Activated CD4-positive, alpha-beta T cell treated with anti-CD3 and anti-CD28 coated beads for 36 hours (primary cell): ENCODE measurements at regions of chr10 and their contacts with region 1.

Region 1: GRCh38 chr10:12656518-12657142 is 307.3 kb downstream of the CAMK1D start:
- DNase-seq: no peak
- ATAC-seq: peak; percentile 75
- H3K4me3 Mint-ChIP-seq: no peak overlapping the region
- H3K27ac Mint-ChIP-seq: no peak overlapping the region
- H3K4me1 Mint-ChIP-seq: peaks cover 27% of the 10 kb centered on the region
- H3K27me3 Mint-ChIP-seq: no peaks in the 10 kb centered on the region

Region 2: DNA sequence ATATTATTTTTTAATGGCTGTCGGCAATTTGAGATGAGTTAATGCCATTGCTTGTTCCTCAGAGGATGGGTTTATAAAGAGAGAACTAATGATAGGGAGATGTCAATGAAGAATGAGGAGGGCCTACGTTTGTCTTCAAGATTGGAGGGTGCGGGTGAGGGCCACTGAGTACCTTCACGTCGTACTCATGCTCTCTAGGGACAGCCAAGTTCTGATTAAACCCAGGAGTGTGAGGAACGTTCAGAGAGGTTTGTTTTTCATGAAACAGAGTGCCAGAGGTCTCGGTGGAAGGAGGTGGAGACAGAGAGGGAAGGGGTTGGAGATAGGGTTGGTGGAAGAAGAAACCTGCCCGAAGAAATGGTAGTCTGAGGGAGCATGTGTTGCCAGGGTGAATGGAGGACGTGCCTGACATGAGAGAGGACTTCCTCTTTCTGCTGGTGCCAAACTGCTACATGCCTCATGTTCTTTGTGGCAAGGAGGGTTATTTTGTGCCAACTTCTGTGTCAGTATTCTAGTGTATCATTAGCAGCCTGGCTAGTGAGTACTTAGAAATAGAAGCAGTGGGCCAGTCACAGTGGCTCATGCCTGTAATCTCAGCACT is 579.0 kb before region 1 on chr10:
- CTCF ChIA-PET with region 1: no interaction called
- POLR2A ChIA-PET with region 1: no interaction called
- intact Hi-C with region 1: no loop called
- DNase-seq: no peak
- ATAC-seq: no peak
- H3K4me3 Mint-ChIP-seq: no peak overlapping the region
- H3K27ac Mint-ChIP-seq: no peak overlapping the region
- H3K4me1 Mint-ChIP-seq: no peaks in the 10 kb centered on the region
- H3K27me3 Mint-ChIP-seq: no peaks in the 10 kb centered on the region

Region 3: DNA sequence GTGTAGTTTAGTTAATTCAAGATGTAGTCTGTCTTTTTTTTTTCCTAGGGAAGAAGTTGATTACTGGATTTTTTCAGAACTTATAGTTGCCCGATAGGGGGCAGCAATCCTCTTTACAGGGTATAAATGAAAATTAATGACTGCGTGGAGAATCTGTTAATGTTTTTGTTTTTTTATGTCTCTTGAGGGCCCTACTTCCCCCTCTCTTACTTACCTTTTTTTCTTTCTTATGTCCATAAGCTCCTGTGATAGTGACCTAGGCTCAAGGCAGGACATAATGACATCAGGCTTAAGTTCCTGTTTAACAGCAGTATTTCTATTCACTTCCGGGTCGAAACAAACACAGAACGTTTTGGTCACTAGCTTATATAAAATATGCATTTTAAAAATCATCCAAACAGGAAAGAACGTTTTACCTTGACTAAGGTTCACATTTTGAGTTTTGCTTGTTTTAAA is 441.8 kb before region 1 on chr10:
- CTCF ChIA-PET with region 1: interaction called, 23 read pairs
- POLR2A ChIA-PET with region 1: no interaction called
- intact Hi-C with region 1: loop called in 1 of 2 experiments (anchors 1 kb)
- DNase-seq: peak; percentile 62
- ATAC-seq: peak; percentile 44
- H3K4me3 Mint-ChIP-seq: no peak overlapping the region
- H3K27ac Mint-ChIP-seq: peak overlapping the region; percentile 77
- H3K4me1 Mint-ChIP-seq: peaks cover 17% of the 10 kb centered on the region
- H3K27me3 Mint-ChIP-seq: no peaks in the 10 kb centered on the region

Region 4: GRCh38 chr10:12484941-12485805 is 171.5 kb before region 1 on chr10:
- CTCF ChIA-PET with region 1: no interaction called
- POLR2A ChIA-PET with region 1: no interaction called
- intact Hi-C with region 1: loop called in 1 of 2 experiments (anchors 5 kb)
- DNase-seq: peak; percentile 64
- ATAC-seq: peak; percentile 82
- H3K4me3 Mint-ChIP-seq: peak overlapping the region; percentile 4
- H3K27ac Mint-ChIP-seq: peak overlapping the region; percentile 73
- H3K4me1 Mint-ChIP-seq: peaks cover 25% of the 10 kb centered on the region
- H3K27me3 Mint-ChIP-seq: no peaks in the 10 kb centered on the region

Region 5: GRCh38 chr10:12594448-12594944 is 62.1 kb before region 1 on chr10:
- CTCF ChIA-PET with region 1: interaction called, 11 read pairs
- POLR2A ChIA-PET with region 1: no interaction called
- intact Hi-C with region 1: no loop called
- DNase-seq: peak; percentile 66
- ATAC-seq: peak; percentile 74
- H3K4me3 Mint-ChIP-seq: peak overlapping the region; percentile 49
- H3K27ac Mint-ChIP-seq: peak overlapping the region; percentile 94
- H3K4me1 Mint-ChIP-seq: peaks cover 90% of the 10 kb centered on the region
- H3K27me3 Mint-ChIP-seq: no peaks in the 10 kb centered on the region

Region 6: GRCh38 chr10:12644380-12645144 is 12.1 kb before region 1 on chr10:
- CTCF ChIA-PET with region 1: interaction called, 17 read pairs
- POLR2A ChIA-PET with region 1: no interaction called
- intact Hi-C with region 1: no loop called
- DNase-seq: peak; percentile 44
- ATAC-seq: peak; percentile 76
- H3K4me3 Mint-ChIP-seq: no peak overlapping the region
- H3K27ac Mint-ChIP-seq: peak overlapping the region; percentile 70
- H3K4me1 Mint-ChIP-seq: peaks cover 30% of the 10 kb centered on the region
- H3K27me3 Mint-ChIP-seq: no peaks in the 10 kb centered on the region

Region 7: GRCh38 chr10:12934777-12935176 is 278.1 kb after region 1 on chr10:
- CTCF ChIA-PET with region 1: no interaction called
- POLR2A ChIA-PET with region 1: no interaction called
- intact Hi-C with region 1: no loop called
- DNase-seq: no peak
- ATAC-seq: no peak
- H3K4me3 Mint-ChIP-seq: no peak overlapping the region
- H3K27ac Mint-ChIP-seq: no peak overlapping the region
- H3K4me1 Mint-ChIP-seq: no peaks in the 10 kb centered on the region
- H3K27me3 Mint-ChIP-seq: peaks cover 16% of the 10 kb centered on the region

Region 8: DNA sequence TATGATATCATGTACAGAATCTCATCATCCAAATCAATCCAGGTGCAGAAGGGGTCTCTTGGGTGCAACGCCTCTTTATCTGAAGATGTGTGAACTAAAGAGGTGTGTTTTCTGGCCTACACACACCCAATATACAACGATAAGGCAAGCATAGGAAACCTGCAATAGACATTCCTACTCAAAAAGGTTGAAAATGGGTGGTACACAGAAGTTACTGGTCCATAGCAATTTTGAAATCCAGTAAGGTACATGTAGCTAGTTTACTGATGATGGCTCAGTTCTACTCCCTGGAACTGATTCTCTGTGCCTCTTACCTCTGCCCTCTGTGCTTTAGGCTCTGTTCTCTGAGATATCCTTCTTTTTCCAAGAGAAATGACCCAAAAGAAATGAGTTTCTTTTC is 367.1 kb after region 1 on chr10:
- CTCF ChIA-PET with region 1: no interaction called
- POLR2A ChIA-PET with region 1: no interaction called
- intact Hi-C with region 1: no loop called
- DNase-seq: no peak
- ATAC-seq: no peak
- H3K4me3 Mint-ChIP-seq: no peak overlapping the region
- H3K27ac Mint-ChIP-seq: no peak overlapping the region
- H3K4me1 Mint-ChIP-seq: no peaks in the 10 kb centered on the region
- H3K27me3 Mint-ChIP-seq: peaks cover 32% of the 10 kb centered on the region